Panc1 (cell line): ENCODE measurements at regions of chr12 and their contacts with region 1.

Region 1: DNA sequence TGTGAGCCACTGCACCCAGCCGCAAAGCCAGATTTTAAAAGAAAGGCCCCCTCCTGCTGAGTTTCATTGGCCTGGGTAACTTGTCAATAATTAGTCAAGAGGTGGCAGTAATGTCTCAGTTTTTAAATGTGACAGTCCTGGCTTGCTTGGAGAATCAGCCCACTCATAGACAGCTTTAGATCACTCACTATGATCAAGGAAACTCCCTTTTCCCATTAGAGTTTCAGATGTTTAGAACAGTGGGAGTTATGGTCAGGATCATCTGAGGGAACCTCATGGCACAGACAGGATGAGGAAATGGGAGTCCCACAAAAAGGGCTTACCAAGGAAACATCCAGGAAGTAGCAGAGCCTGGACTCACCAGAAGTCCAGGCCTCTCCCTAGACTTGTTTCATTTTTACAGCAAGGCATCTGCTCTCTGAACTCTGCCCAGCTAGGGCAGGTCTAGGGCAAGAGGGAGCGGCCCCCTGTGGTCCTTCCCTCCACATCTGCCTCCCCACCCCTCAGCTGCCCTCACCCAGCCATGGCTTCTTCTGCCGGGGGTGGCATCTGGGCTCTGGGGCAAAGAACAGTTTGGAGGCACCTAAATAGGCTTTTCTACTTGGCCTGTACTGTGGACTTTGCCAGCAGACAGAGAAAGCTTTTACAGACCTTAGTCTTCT is 11.2 kb downstream of the BCL2L14 start:
- DNase-seq: peak; percentile 20
- ATAC-seq: peak; percentile 92
- H3K4me3 ChIP-seq: no peak overlapping the region
- H3K27ac ChIP-seq: no peak overlapping the region
- H3K4me1 ChIP-seq: no peaks in the 10 kb centered on the region
- H3K27me3 ChIP-seq: no peaks in the 10 kb centered on the region
- CTCF ChIP-seq: peak; percentile 52; the same call in 1 of the 2 replicates

Region 2: DNA sequence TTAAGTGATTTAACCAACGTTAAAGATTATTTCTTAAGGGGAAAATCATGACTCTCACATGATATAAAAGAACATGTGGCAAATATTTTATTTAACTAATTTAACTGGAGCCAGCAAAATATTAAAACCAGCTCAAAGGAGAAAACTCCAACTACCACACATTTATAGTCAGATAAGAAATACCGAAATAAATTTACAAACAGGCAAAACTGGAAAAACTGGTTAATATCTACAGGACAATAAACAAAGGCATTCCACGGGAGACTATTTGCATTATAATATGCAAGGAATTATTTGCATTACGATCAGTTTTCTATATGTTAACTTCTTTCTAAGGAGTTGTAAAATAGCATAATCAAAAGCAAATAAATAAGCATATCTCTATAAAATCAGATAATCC is 25.0 kb before region 1 on chr12:
- CTCF ChIA-PET with region 1: no interaction called
- POLR2A ChIA-PET with region 1: no interaction called
- in situ Hi-C with region 1: no loop called
- intact Hi-C with region 1: no loop called
- DNase-seq: no peak
- ATAC-seq: no peak
- H3K4me3 ChIP-seq: no peak overlapping the region
- H3K27ac ChIP-seq: no peak overlapping the region
- H3K4me1 ChIP-seq: no peaks in the 10 kb centered on the region
- H3K27me3 ChIP-seq: no peaks in the 10 kb centered on the region
- CTCF ChIP-seq: no peak

Region 3: GRCh38 chr12:12141000-12141399 is 59.0 kb after region 1 on chr12:
- CTCF ChIA-PET with region 1: interaction called, 10 read pairs
- POLR2A ChIA-PET with region 1: no interaction called
- in situ Hi-C with region 1: no loop called
- intact Hi-C with region 1: no loop called
- DNase-seq: no peak
- ATAC-seq: no peak
- H3K4me3 ChIP-seq: no peak overlapping the region
- H3K27ac ChIP-seq: no peak overlapping the region
- H3K4me1 ChIP-seq: no peaks in the 10 kb centered on the region
- H3K27me3 ChIP-seq: no peaks in the 10 kb centered on the region
- CTCF ChIP-seq: no peak

Region 4: GRCh38 chr12:12327802-12328201 is 245.8 kb after region 1 on chr12:
- CTCF ChIA-PET with region 1: interaction called, 3 read pairs
- POLR2A ChIA-PET with region 1: no interaction called
- in situ Hi-C with region 1: no loop called
- intact Hi-C with region 1: loop called (anchors 2 kb)
- DNase-seq: no peak
- ATAC-seq: no peak
- H3K4me3 ChIP-seq: no peak overlapping the region
- H3K27ac ChIP-seq: no peak overlapping the region
- H3K4me1 ChIP-seq: no peaks in the 10 kb centered on the region
- H3K27me3 ChIP-seq: no peaks in the 10 kb centered on the region
- CTCF ChIP-seq: peak; percentile 71; the same call in 1 of the 2 replicates

Region 5: DNA sequence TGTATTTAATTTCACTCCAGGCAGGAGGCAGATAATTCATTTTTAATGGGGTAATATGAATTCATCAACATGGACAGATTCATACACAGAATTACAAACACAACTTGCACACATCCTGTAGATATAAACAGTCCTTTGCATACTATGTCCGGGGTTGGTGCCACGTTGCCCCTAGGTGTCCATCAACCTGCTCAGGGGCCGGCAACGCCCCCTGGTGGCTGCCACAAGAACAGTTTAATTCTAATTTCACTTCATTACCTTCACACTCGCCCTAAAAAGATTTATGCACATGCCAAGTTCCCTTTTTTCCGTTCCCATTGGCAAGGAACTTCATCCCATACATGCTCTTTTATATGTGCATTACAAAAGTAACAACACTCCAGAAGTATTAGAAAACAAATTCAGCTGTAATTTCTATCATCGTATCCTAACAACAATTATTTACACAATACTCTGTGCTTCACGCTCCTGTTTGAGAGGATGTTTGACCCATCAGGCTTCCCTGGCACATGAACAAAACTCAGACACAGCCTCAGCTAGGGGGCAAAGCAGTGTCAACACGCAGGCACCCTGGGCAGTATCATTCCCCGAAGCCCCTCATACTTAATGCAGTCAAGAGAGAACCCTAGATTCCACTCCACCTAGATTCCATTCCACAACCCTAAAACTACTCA is 252.5 kb after region 1 on chr12:
- CTCF ChIA-PET with region 1: interaction called, 3 read pairs
- POLR2A ChIA-PET with region 1: no interaction called
- in situ Hi-C with region 1: no loop called
- intact Hi-C with region 1: loop called (anchors 2 kb)
- DNase-seq: no peak
- ATAC-seq: peak; percentile 77; the same call in 1 of the 2 replicates
- H3K4me3 ChIP-seq: no peak overlapping the region
- H3K27ac ChIP-seq: no peak overlapping the region
- H3K4me1 ChIP-seq: no peaks in the 10 kb centered on the region
- H3K27me3 ChIP-seq: no peaks in the 10 kb centered on the region
- CTCF ChIP-seq: peak; percentile 91

Region 6: DNA sequence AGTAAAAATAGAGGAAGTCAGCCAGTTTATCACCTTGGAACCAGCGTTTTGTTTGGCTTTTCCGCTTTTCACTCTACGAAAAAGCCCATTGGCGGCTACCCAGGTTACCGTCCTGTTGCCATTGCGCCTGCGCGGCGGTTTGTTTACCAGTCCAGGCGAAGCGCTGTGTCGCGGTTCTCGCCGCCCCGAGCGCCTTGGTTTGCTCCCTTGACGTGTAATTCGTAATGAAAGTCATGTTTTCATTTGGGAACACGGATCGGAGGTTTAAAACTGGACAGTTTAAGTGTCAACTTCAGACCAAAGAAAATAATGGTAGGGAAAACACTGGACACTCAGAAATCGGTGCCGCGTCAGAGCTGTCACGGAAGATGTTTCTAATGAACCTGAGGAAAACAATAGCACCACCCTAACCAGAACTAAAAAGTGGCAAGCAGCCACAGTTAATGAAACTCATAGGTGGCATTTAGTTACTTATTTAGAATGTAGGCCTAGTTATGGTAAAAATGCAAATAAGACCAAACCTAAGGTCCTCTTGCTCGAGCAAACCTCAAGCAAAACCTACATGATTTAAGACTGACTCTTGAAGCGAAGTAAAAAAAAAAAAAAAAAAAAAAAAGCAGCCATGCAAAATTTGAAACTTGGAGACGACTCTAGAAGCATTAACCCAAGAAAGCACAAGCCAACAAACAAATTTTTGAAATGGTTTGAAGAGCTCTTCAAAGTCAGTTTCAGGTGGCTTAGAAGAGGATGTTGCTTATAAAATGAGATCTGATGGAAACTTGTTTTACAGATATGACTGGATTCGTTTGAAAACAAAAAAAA is 614.8 kb after region 1 on chr12:
- CTCF ChIA-PET with region 1: no interaction called
- POLR2A ChIA-PET with region 1: no interaction called
- in situ Hi-C with region 1: no loop called
- intact Hi-C with region 1: no loop called
- DNase-seq: no peak
- ATAC-seq: peak; percentile 85
- H3K4me3 ChIP-seq: peak overlapping the region; percentile 51 to 90
- H3K27ac ChIP-seq: peak overlapping the region; percentile 93
- H3K4me1 ChIP-seq: peaks cover 7% of the 10 kb centered on the region; the same call in 1 of the 2 replicates
- H3K27me3 ChIP-seq: no peaks in the 10 kb centered on the region
- CTCF ChIP-seq: no peak